Natural killer cell (primary cell): ENCODE measurements at regions of chr10 and their contacts with region 1.

Region 1: GRCh38 chr10:102660888-102661657 is 16.8 kb downstream of the TRIM8 start:
- DNase-seq: peak; percentile 57 to 76
- ATAC-seq: peak; percentile 86 to 92 (median 88)
- H3K4me3 ChIP-seq: peak overlapping the region; percentile 10
- H3K4me3 Mint-ChIP-seq: peak overlapping the region; percentile 75
- H3K27ac ChIP-seq: peak overlapping the region; percentile 65
- H3K27ac Mint-ChIP-seq: peak overlapping the region; percentile 74 to 89
- H3K4me1 ChIP-seq: peaks cover 39% of the 10 kb centered on the region
- H3K4me1 Mint-ChIP-seq: peaks cover 11 to 35% of the 10 kb centered on the region in 2 donors
- H3K27me3 ChIP-seq: no peaks in the 10 kb centered on the region
- H3K27me3 Mint-ChIP-seq: no peaks in the 10 kb centered on the region
- CTCF ChIP-seq: no peak

Region 2: DNA sequence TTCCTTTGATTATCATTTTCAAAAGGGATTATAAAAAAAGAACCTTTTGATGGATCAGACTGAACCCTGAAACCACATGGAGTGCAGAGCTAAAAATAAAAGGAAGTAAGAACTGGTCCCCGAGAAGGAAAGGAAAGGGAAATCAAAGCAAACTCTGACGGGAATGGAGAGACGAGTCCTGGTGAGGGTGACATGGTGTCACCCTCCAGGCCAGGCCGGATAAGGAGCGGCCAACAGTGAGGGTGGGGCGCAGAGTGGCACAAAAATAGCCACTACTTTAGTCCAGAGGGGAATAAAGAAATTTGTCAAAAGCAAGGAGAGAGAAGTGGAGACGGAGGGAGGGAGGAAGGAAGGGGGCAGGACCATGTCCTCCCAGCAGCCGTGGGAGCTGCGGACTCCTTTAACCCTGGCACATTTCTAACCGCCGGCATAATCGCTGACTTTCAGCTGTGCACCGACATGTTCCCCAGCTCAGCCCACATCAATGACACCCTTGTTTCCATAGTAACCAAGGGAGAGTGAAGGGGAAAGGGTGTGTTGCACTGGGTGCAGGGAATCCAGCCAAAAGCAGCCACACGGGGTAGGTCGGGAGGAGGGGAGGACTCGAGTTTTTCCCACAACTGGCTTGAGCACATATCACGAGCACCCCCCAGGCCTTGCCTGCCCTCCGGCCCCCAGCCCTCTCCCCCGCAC is 12.9 kb after region 1 on chr10:
- intact Hi-C with region 1: loop called (anchors 2 kb)
- DNase-seq: peak; percentile 41 to 91
- ATAC-seq: peak; percentile 77 to 86 (median 85)
- H3K4me3 ChIP-seq: peak overlapping the region; percentile 25
- H3K4me3 Mint-ChIP-seq: peak overlapping the region; percentile 91
- H3K27ac ChIP-seq: peak overlapping the region; percentile 77
- H3K27ac Mint-ChIP-seq: peak overlapping the region; percentile 85
- H3K4me1 ChIP-seq: peaks cover 52% of the 10 kb centered on the region
- H3K4me1 Mint-ChIP-seq: peaks cover 33 to 43% of the 10 kb centered on the region in 2 donors
- H3K27me3 ChIP-seq: no peaks in the 10 kb centered on the region
- H3K27me3 Mint-ChIP-seq: no peaks in the 10 kb centered on the region
- CTCF ChIP-seq: no peak